ENCODE measurements at regions of chr16 and their contacts with region 1.

Region 1: GRCh38 chr16:28069971-28070794 is 6.7 kb upstream of the GSG1L start:
- DNase-seq: no peak
- H3K4me3 ChIP-seq: no peak overlapping the region
- H3K27ac ChIP-seq: no peak overlapping the region
- H3K4me1 ChIP-seq: peaks cover 0 to 15% of the 10 kb centered on the region in 2 donors
- H3K27me3 ChIP-seq: no peaks in the 10 kb centered on the region
- CTCF ChIP-seq: no peak

Region 2: DNA sequence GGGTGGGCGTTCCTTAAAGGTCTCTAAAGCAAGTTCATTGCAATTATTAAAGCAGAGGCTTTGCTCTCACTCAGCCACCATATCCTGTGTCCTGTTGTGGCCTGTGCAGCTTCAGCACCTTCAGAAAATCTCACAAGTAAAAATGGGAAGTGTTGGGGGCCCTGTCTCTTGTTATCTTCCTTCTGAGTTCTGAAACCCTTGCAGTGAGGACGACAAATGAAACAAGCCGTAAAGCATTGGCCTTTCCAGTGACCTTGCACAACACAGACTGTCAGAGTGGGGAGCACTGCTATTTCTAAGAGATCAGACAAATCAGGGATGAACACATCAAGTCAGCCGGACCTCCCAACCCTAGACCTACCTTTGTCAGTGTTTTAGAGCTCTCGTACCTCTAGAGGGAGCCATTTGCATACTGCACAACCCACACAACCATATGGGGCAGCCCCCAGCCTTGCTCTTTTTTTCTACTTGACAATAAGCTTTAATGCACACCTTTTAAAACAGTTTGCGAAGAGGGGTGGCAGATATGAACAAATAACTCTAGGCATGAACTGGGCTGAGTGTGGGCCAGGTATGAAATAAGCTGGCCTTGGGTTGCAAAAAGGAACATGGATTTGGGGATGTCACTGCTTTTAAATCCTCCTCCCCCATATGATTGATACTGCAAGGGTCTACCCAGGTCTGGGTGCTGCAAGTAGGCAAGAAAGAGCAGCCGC is 430.5 kb before region 1 on chr16:
- intact Hi-C with region 1: loop called (anchors 2 kb)
- DNase-seq: no peak
- H3K4me3 ChIP-seq: no peak overlapping the region
- H3K27ac ChIP-seq: no peak overlapping the region
- H3K4me1 ChIP-seq: no peaks in the 10 kb centered on the region
- H3K27me3 ChIP-seq: no peaks in the 10 kb centered on the region
- CTCF ChIP-seq: peak in 2 of 3 experiments; percentile 23 to 55

Region 3: GRCh38 chr16:27690608-27691007 is 379.6 kb before region 1 on chr16:
- intact Hi-C with region 1: loop called (anchors 1 kb)
- DNase-seq: peak in 1 of 2 donors; percentile 42
- H3K4me3 ChIP-seq: no peak overlapping the region
- H3K27ac ChIP-seq: no peak overlapping the region
- H3K4me1 ChIP-seq: no peaks in the 10 kb centered on the region
- H3K27me3 ChIP-seq: no peaks in the 10 kb centered on the region
- CTCF ChIP-seq: peak in 2 of 3 experiments; percentile 30 to 50

Region 4: GRCh38 chr16:27779641-27780164 is 290.5 kb before region 1 on chr16:
- intact Hi-C with region 1: loop called (anchors 1 kb)
- DNase-seq: no peak
- H3K4me3 ChIP-seq: peak overlapping the region in 1 of 2 donors; percentile 33
- H3K27ac ChIP-seq: peak overlapping the region in 1 of 2 donors; percentile 16
- H3K4me1 ChIP-seq: peaks cover 4 to 14% of the 10 kb centered on the region in 2 donors
- H3K27me3 ChIP-seq: no peaks in the 10 kb centered on the region
- CTCF ChIP-seq: peak; percentile 38 to 56 (median 44)

Region 5: DNA sequence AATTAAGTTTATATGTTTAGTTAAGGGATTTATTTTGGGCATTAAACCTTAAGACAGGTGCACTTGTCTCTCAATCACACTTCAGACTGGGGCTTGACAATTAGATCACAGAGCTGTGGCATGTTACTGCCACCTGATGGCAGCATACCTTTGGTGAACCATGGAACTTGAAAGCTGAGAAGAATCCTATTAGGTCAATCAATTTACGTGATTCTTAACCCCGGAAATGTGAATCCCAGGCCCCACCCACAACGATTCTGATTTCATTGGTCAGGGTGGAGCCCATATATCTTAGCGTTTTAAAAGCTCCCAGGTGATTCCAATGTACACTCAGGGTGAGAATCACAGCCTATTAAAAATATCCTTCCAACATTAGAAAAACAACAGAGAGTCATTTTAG is 97.7 kb before region 1 on chr16:
- intact Hi-C with region 1: loop called (anchors 1 kb)
- DNase-seq: peak in 1 of 2 donors; percentile 63
- H3K4me3 ChIP-seq: no peak overlapping the region
- H3K27ac ChIP-seq: no peak overlapping the region
- H3K4me1 ChIP-seq: no peaks in the 10 kb centered on the region
- H3K27me3 ChIP-seq: no peaks in the 10 kb centered on the region
- CTCF ChIP-seq: peak; percentile 46 to 60 (median 48)

Region 6: DNA sequence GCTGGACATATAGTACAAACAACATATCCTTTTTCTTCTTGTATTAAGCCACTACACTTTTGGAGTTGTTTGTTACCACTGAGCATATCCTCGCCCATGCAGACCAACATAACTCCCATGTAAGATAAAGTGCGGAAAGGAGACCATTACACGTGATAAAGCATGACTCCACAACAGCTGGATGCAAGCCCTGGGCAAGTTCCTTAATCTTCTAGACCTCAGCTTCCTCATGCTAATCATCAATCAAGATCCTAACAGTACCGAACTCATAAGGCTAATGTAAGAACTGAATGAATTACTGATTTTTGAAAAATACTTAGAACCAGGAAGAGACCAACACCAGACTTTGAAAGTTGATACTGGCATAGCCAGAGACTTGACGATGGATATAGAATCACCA is 40.3 kb after region 1 on chr16:
- intact Hi-C with region 1: no loop called
- DNase-seq: no peak
- H3K4me3 ChIP-seq: no peak overlapping the region
- H3K27ac ChIP-seq: no peak overlapping the region
- H3K4me1 ChIP-seq: no peaks in the 10 kb centered on the region
- H3K27me3 ChIP-seq: no peaks in the 10 kb centered on the region
- CTCF ChIP-seq: no peak

Region 7: DNA sequence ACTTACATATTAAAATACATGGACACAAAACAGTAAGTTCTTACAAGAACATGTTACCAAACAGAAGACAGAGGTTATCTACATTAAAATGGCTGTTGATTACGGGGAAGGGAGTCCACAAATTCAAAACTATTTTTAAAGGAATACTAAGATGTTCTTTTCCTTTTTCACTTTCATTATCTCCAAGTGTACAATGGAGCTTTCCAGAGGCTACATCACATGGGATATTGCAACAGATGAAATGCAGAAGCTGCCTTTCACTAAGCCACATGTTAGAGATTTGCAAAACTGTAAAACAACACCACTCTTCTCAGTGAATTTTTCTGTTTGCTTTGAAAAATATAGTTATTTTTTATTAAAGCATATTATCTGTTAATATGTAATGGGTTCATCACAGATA is 88.0 kb after region 1 on chr16:
- intact Hi-C with region 1: no loop called
- DNase-seq: no peak
- H3K4me3 ChIP-seq: no peak overlapping the region
- H3K27ac ChIP-seq: no peak overlapping the region
- H3K4me1 ChIP-seq: no peaks in the 10 kb centered on the region
- H3K27me3 ChIP-seq: no peaks in the 10 kb centered on the region
- CTCF ChIP-seq: no peak

Region 8: DNA sequence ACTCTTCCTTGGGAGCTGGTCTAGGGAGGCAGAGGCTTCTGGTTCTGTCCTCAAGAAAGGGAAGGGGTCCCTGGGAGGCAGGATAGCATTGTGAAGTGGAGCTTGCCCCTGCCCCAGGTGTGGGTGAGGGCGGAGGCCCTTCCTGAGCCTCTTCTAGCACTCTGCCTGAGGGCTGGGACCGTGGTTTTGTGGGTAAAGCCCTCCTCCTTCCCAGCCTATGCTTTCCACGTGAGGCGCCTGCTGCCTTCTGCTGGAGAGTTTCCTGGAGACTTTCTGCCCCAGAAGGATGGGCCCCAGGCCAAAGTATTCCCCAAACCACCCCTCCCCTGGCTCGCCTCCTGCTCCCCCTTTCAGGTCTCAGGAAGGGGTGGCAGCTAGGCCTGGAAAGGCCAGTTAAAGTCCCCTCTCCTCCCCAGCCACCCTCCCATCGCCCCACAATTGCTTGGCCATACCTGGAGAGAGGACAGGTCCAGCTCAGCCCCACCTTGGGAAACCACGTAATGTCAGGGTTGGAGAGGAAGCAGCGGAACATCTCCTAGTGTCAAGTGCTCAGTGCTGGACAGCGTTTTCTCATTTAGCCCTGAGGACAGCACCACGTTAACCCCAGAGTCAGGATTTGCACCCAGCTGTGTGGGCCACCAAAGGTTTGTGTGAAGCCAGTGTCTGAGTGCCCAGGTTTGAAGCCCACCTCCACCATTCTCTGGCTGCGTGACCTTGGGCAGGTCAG is 227.8 kb after region 1 on chr16:
- intact Hi-C with region 1: no loop called
- DNase-seq: no peak
- H3K4me3 ChIP-seq: no peak overlapping the region
- H3K27ac ChIP-seq: no peak overlapping the region
- H3K4me1 ChIP-seq: peaks cover 2 to 5% of the 10 kb centered on the region in 2 donors
- H3K27me3 ChIP-seq: no peaks in the 10 kb centered on the region
- CTCF ChIP-seq: no peak

Measured in ascending aorta (tissue), 2 donors.